ENCODE measurements at regions of chr2 and their contacts with region 1.

Region 1: GRCh38 chr2:46461011-46461674 is 18.2 kb upstream of the TMEM247 start:
- DNase-seq: peak; percentile 86
- ATAC-seq: peak; percentile 80
- H3K4me3 ChIP-seq: no peak overlapping the region
- H3K27ac ChIP-seq: peak overlapping the region; percentile 55
- H3K4me1 ChIP-seq: peaks cover 33% of the 10 kb centered on the region
- H3K27me3 ChIP-seq: no peaks in the 10 kb centered on the region
- CTCF ChIP-seq: peak; percentile 99

Region 2: DNA sequence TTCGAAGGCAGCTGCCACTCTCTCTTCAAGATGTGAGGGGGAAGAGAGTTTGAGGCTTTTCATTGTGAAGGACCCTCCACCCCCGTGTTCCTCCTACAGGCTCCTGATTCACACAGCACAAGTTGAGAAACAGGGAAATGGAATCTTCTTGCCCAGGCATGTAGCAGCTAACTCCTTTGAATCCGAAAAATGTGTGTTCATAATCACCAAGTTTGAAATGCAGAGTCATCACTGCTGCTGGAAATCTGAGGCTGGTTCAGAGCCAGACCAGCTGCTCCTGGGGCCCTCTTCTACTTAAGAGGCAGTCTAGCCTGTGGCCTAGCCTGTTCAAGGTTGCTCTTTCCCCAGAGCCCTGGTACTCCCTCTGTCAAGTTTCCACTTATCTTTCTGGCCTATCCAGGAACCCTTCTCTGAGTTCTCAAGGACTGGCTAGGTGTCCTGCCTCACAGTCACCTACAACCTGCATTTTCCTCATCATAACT is 184.6 kb after region 1 on chr2:
- intact Hi-C with region 1: loop called (anchors 2 kb)
- DNase-seq: no peak
- ATAC-seq: peak; percentile 76
- H3K4me3 ChIP-seq: no peak overlapping the region
- H3K27ac ChIP-seq: peak overlapping the region; percentile 26
- H3K4me1 ChIP-seq: peaks cover 25% of the 10 kb centered on the region
- H3K27me3 ChIP-seq: no peaks in the 10 kb centered on the region
- CTCF ChIP-seq: no peak

Measured in upper lobe of right lung (tissue), 1 donor.